Prostate gland (tissue), 2 donors: ENCODE measurements at regions of chr4 and their contacts with region 1.

Region 1: GRCh38 chr4:185730387-185730786 is 81.6 kb downstream of the SORBS2 start:
- DNase-seq: no peak
- H3K4me3 ChIP-seq: no peak overlapping the region
- H3K27ac ChIP-seq: peak overlapping the region in 1 of 2 donors; percentile 49
- H3K4me1 ChIP-seq: peaks cover 2% of the 10 kb centered on the region
- H3K27me3 ChIP-seq: no peaks in the 10 kb centered on the region
- CTCF ChIP-seq: no peak
- POLR2A ChIP-seq: no peak

Region 2: GRCh38 chr4:185693548-185694215 is 36.7 kb before region 1 on chr4:
- intact Hi-C with region 1: no loop called
- DNase-seq: no peak
- H3K4me3 ChIP-seq: no peak overlapping the region
- H3K27ac ChIP-seq: no peak overlapping the region
- H3K4me1 ChIP-seq: no peaks in the 10 kb centered on the region
- H3K27me3 ChIP-seq: no peaks in the 10 kb centered on the region
- CTCF ChIP-seq: no peak
- POLR2A ChIP-seq: no peak

Region 3: DNA sequence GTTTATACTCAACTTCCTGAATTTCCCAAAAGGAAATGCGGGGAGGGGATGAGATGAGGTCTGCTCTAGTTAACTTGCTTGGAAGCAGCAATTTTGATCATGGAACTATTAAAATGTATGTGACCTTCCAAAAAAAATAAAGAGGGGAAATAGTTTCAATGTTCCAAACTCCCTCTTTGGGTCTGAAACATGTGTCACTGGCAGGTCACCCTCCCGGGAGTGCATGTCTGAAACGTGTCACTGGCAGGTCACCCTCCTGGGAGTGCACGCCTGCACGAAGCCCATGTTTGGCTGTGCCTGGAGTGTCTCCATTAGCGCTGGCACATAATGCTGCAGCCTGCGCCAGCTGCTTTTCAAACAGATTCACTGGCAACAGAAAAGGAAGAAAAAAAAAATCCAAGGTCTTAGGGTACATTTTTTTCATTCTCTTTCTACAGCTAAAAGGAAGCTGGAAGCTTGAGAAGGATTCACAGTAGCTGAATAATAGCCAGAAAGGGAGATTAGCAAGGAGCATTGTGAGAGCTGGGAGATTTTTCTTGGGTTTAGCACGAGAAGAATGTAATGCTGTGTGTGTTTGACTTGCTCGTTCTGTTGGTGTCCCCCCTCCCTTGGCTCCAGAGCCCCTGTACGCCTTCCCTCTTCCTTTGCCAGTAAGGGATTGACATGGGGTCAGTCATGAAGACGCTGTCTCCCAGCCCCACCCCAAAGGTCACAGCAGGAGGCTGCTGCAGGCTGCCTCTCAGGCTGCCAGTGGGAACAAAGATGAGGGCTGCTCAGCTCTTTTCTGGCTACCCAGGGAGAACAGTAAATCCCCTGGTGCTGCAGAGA is 299.4 kb after region 1 on chr4:
- intact Hi-C with region 1: loop called (anchors 5 kb)
- DNase-seq: peak; percentile 74
- H3K4me3 ChIP-seq: no peak overlapping the region
- H3K27ac ChIP-seq: peak overlapping the region; percentile 68 to 73
- H3K4me1 ChIP-seq: peaks cover 10% of the 10 kb centered on the region
- H3K27me3 ChIP-seq: no peaks in the 10 kb centered on the region
- CTCF ChIP-seq: no peak
- POLR2A ChIP-seq: no peak